Mammary epithelial cell (primary cell): ENCODE measurements at regions of chr17 and their contacts with region 1.

Region 1: GRCh38 chr17:50514946-50515702 is 6.9 kb downstream of the MYCBPAP start:
- DNase-seq: peak; percentile 60
- H3K4me3 ChIP-seq: no peak overlapping the region
- H3K27ac ChIP-seq: no peak overlapping the region
- H3K4me1 ChIP-seq: peaks cover 63% of the 10 kb centered on the region
- H3K27me3 ChIP-seq: no peaks in the 10 kb centered on the region
- CTCF ChIP-seq: no peak

Region 2: GRCh38 chr17:50471009-50471905 is 43.9 kb before region 1 on chr17:
- CTCF ChIA-PET with region 1: no interaction called
- dilution Hi-C with region 1: loop called (anchors 5 kb)
- in situ Hi-C with region 1: no loop called
- intact Hi-C with region 1: no loop called
- DNase-seq: no peak
- H3K4me3 ChIP-seq: no peak overlapping the region
- H3K27ac ChIP-seq: no peak overlapping the region
- H3K4me1 ChIP-seq: peaks cover 21% of the 10 kb centered on the region
- H3K27me3 ChIP-seq: peaks cover 4% of the 10 kb centered on the region
- CTCF ChIP-seq: no peak

Region 3: GRCh38 chr17:50501054-50501453 is 14.1 kb before region 1 on chr17:
- CTCF ChIA-PET with region 1: no interaction called
- dilution Hi-C with region 1: no loop called
- in situ Hi-C with region 1: no loop called
- intact Hi-C with region 1: loop called (anchors 2 kb)
- DNase-seq: no peak
- H3K4me3 ChIP-seq: no peak overlapping the region
- H3K27ac ChIP-seq: no peak overlapping the region
- H3K4me1 ChIP-seq: peaks cover 19% of the 10 kb centered on the region
- H3K27me3 ChIP-seq: no peaks in the 10 kb centered on the region
- CTCF ChIP-seq: peak; percentile 26 to 54

Region 4: DNA sequence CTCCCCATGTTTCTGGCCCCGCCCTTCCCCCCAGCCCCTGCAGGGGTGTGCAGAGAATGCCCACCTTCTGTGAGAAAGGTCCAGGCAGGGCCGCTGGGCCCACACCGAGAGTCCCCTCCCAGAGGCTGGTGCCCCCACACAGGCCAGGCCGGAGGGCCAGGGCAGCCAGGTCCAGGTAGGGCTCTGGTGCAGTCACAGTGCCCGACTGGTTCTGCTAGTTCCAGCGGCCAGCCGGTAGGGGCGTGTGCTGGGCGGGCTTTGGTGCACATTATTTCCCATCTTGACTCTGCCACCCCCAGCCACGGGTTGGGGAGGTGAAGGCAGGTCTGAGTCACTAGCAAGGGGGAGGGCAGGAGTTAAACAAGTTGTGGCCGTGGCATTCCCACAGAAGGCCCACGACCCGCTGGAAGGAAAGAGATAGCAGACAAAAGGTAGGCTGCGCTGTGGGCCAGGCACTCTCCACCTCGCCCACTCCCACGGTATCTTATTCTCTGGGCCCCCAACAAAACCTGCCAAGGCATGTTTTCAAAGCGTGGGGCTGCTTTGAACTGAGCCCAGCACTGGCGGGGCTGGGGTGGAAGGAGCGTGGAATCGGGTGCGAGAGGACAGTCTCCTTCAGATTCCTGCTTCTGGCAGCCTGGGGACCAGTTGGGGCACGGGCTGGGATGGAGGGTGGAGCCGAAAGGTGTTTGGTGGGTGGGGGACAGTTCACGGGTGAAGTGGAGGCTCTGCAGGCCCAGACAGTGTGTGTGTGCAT is 19.3 kb after region 1 on chr17:
- CTCF ChIA-PET with region 1: no interaction called
- dilution Hi-C with region 1: no loop called
- in situ Hi-C with region 1: no loop called
- intact Hi-C with region 1: loop called (anchors 1 kb)
- DNase-seq: peak; percentile 86
- H3K4me3 ChIP-seq: peak overlapping the region; percentile 51 to 87 (median 64)
- H3K27ac ChIP-seq: peak overlapping the region; percentile 36
- H3K4me1 ChIP-seq: peaks cover 56% of the 10 kb centered on the region
- H3K27me3 ChIP-seq: no peaks in the 10 kb centered on the region
- CTCF ChIP-seq: peak; percentile 52 to 74

Region 5: DNA sequence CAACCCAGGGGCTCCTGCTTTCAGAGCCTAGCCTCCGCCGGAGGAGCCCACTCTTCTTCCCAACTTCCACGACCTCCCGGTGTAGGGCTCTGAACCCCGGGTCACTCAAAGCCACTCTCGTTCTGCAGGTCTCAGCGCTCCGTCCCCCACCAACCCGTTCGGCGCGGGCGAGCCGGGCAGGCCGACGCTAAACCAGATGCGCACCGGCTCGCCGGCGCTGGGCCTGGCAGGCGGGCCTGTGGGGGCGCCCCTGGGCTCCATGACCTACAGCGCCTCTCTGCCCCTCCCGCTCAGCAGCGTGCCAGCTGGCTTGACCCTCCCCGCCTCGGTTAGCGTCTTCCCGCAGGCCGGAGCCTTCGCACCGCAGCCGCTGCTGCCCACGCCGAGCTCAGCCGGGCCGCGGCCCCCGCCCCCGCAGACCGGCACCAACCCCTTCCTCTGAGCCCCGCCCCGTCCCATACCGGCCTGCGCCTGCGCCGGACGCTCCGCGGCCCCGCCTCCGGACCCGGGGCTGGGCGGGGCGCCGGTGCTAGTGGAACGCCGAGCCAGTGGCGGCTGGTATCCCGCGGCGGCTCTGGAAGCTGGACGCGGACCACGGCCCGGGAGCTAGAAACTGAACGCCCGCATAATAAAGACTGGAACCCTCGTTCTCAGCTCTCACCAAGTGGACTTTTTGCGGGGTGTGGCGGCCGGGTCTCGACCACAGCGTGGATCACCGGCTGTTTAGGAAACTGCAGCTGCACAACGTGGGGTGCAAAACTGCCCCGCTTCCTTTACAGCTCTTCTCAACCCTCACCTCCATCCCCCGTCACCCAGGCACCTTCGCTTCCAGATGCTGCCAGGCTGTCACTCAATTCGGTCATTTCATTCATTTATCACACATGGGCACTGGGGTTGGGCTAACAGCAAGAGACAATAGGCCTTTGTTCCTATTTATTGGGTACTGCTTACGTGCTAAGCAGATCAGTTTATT is 26.9 kb after region 1 on chr17:
- CTCF ChIA-PET with region 1: interaction called, 3 read pairs
- dilution Hi-C with region 1: no loop called
- in situ Hi-C with region 1: no loop called
- intact Hi-C with region 1: loop called (anchors 1 kb)
- DNase-seq: peak; percentile 82
- H3K4me3 ChIP-seq: peak overlapping the region in 2 of 3 experiments; percentile 16 to 28
- H3K27ac ChIP-seq: no peak overlapping the region
- H3K4me1 ChIP-seq: peaks cover 60% of the 10 kb centered on the region
- H3K27me3 ChIP-seq: no peaks in the 10 kb centered on the region
- CTCF ChIP-seq: peak in 1 of 2 donors; percentile 12

Region 6: DNA sequence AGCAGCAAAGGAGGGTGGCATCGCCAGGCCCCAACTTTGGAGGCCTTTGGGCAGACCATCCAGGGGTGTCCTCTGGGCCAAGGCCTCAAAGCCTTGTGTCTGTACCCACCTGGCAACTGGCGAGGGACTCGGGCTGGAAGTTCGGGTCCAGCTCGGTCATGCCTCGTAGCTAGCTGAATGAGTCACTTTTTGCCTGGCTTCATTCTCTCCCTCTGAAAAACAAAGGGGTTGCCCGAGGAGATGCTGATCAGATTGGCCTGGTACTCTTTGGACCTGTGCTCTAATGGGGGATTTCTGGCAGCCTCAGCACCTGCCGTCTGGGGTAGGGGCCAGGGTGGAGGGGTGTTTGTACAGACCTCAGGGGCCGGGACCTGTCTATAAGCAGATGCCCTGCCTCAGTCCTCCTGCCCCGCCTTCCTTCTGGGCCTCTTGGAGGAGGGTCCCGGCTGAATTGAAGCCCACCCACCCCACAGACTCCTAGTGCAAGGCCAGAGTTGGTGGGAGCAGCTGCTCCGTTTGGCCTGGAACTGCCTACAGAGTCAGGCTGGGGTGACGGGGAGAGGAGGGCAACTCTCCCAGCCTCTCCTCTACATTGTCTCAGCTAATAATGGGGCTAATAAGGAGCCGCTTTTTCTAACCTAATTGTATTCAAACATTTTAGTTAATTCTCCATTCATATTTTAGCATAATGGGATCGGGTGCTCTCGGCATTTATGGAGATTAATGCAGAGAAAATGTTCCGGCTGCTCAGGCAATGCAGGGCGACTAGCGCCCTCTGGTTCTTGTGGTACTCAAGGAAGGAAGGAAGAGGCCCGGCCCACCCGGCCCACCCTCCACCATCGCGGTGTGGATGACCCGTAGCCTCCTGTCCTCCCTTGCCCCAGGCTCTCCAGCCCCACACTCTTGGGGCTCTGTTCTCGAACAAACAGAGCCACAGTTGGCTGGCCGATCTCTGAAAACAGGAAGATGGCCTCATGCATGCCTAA is 98.2 kb after region 1 on chr17:
- CTCF ChIA-PET with region 1: no interaction called
- dilution Hi-C with region 1: no loop called
- in situ Hi-C with region 1: no loop called
- intact Hi-C with region 1: no loop called
- DNase-seq: no peak
- H3K4me3 ChIP-seq: no peak overlapping the region
- H3K27ac ChIP-seq: no peak overlapping the region
- H3K4me1 ChIP-seq: no peaks in the 10 kb centered on the region
- H3K27me3 ChIP-seq: no peaks in the 10 kb centered on the region
- CTCF ChIP-seq: no peak